T-cell (primary cell): ENCODE measurements at regions of chr12 and their contacts with region 1.

Region 1: DNA sequence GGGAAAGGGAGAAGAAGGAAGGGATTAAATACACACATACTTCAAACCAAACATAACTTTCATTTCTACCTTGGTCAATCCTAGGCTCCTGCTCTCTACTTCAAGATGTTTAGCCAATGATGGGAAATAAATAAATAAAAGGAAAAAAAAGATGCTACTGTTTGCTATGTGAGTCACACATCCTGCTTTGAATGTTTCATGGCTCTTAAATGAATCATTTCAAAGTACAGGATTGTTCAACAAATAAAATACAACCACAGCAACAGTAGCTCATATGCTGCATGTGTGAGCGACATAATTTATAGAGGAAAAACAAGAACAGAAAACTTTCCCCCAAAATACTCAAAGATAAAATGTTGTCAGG is 54.3 kb upstream of the NPFF start:
- DNase-seq: no peak
- ATAC-seq: peak in 3 of 4 experiments; percentile 54 to 75 (median 62)
- H3K4me3 ChIP-seq: no peak overlapping the region
- H3K4me3 Mint-ChIP-seq: no peak overlapping the region
- H3K27ac ChIP-seq: no peak overlapping the region
- H3K27ac Mint-ChIP-seq: peak overlapping the region; percentile 31 to 32
- H3K4me1 ChIP-seq: peaks cover 16 to 23% of the 10 kb centered on the region in 2 experiments
- H3K4me1 Mint-ChIP-seq: peaks cover 45 to 52% (median 52%) of the 10 kb centered on the region in 3 donors
- H3K27me3 ChIP-seq: no peaks in the 10 kb centered on the region
- H3K27me3 Mint-ChIP-seq: no peaks in the 10 kb centered on the region

Region 2: DNA sequence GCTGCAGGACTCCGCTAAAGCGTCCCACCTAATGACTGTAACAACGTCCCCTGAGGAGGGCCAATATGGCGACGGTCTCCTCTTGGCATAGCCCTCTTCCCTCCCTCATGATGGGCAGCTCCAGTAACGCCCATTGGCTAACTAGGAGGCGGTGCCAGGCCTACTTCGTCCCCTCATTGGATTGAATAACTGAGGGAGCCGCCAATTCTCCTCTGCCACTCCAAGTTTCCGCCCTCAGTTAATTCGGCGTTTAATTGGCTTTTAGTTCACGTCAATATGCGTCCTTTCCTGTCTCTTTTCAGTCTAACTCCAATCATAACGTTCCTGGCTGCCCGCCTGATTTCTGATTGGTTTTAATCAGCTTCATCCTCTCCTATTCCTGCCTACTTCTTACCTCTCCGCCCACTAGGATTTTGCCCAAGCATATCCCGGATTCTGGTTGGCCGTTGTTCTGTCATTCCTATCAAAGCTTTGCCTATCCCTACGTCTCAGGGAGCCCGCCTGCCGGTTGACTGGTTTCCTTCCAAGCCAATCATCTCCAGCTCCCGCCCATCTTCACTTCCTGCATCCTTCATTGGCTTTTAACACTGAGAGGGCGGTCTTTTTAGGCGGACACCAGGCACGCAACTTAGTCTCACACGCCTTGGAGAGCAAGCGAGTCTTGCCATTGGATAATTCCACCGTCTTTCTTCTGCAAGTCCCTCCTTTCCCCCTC is 182.0 kb before region 1 on chr12:
- CTCF ChIA-PET with region 1: no interaction called
- POLR2A ChIA-PET with region 1: no interaction called
- DNase-seq: peak in 34 of 35 experiments; percentile 76 to 100 (median 98)
- ATAC-seq: peak; percentile 75 to 79 (median 76)
- H3K4me3 ChIP-seq: peak overlapping the region; percentile 51 to 65
- H3K4me3 Mint-ChIP-seq: no peak overlapping the region
- H3K27ac ChIP-seq: peak overlapping the region; percentile 64
- H3K27ac Mint-ChIP-seq: no peak overlapping the region
- H3K4me1 ChIP-seq: peaks cover 31 to 51% of the 10 kb centered on the region in 2 experiments
- H3K4me1 Mint-ChIP-seq: peaks cover 32 to 45% (median 38%) of the 10 kb centered on the region in 3 donors
- H3K27me3 ChIP-seq: no peaks in the 10 kb centered on the region
- H3K27me3 Mint-ChIP-seq: no peaks in the 10 kb centered on the region

Region 3: GRCh38 chr12:53465679-53466078 is 95.9 kb before region 1 on chr12:
- CTCF ChIA-PET with region 1: no interaction called
- POLR2A ChIA-PET with region 1: no interaction called
- DNase-seq: no peak
- ATAC-seq: no peak
- H3K4me3 ChIP-seq: no peak overlapping the region
- H3K4me3 Mint-ChIP-seq: no peak overlapping the region
- H3K27ac ChIP-seq: no peak overlapping the region
- H3K27ac Mint-ChIP-seq: peak overlapping the region in 1 of 2 donors; percentile 34
- H3K4me1 ChIP-seq: peaks cover 0 to 10% of the 10 kb centered on the region in 2 experiments
- H3K4me1 Mint-ChIP-seq: peaks cover 32 to 42% (median 34%) of the 10 kb centered on the region in 3 donors
- H3K27me3 ChIP-seq: no peaks in the 10 kb centered on the region
- H3K27me3 Mint-ChIP-seq: no peaks in the 10 kb centered on the region

Region 4: DNA sequence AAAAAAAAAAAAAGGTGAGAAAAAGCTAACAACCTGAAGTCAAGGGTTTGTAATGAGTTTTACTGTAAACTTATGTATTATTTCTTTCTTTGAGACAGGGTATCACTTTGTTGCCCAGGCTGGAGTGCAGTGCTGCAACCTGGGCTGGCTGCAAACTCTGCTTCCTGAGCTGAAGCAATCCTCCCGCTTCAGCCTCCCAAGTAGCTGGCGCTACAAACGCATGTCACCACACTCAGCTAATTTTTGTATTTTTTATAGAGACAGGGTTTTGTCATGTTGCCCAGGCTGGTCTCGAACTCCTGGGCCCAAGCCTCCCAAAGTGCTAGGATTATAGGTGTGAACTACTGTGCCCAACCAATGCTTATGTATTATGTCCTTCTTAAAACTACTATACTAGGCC is 55.4 kb after region 1 on chr12:
- CTCF ChIA-PET with region 1: no interaction called
- POLR2A ChIA-PET with region 1: interaction called in 1 of 2 experiments, 10 read pairs
- DNase-seq: no peak
- ATAC-seq: no peak
- H3K4me3 ChIP-seq: no peak overlapping the region
- H3K4me3 Mint-ChIP-seq: no peak overlapping the region
- H3K27ac ChIP-seq: no peak overlapping the region
- H3K27ac Mint-ChIP-seq: peak overlapping the region in 1 of 2 donors; percentile 36
- H3K4me1 ChIP-seq: peaks cover 7 to 12% of the 10 kb centered on the region in 2 experiments
- H3K4me1 Mint-ChIP-seq: peaks cover 22 to 31% (median 26%) of the 10 kb centered on the region in 3 donors
- H3K27me3 ChIP-seq: no peaks in the 10 kb centered on the region
- H3K27me3 Mint-ChIP-seq: no peaks in the 10 kb centered on the region